CD4-positive, alpha-beta memory T cell (primary cell): ENCODE measurements at regions of chr21 and their contacts with region 1.

Region 1: DNA sequence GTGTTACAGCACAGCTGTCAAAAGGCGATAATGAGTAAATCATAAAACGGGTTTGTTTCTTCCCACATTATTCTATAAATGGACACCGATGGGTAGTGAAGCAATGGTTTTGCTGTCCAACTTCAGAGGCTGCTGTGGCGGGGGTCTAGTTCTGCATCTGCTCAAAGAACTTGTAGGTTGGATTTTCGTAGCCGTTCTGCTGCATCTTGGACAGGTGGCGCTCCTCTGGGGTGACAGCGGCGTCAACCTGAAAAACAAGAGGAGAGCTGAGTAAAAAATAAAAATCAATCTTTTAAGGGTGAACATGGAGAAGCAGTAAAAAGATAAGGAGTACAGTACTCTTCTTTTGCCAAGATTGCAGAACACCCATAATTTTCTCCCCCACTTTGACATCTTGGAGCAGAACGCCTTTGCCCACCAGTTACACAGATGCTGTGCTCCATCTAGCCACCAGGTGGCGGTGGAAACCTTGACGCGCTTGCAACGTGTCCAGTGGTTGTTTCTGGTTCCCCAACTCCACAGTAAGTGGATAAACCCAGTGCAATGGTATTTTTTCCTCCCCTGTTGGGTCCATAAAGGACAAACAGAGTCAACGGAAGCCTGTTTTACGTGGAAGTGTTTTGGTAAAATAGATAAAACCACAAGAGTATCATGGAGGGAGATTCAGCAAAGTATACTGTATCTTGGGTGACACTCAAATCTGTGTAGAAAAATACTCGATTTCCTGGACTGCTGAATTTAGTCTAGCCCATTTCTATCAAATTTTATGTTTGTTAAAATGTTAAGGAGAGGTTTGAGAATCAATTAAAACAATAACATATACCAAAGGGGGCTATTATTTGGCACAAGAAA is 147.0 kb downstream of the GABPA start:
- DNase-seq: peak; percentile 42 to 56 (median 48)
- H3K4me3 ChIP-seq: no peak overlapping the region
- H3K4me3 Mint-ChIP-seq: no peak overlapping the region
- H3K27ac ChIP-seq: no peak overlapping the region
- H3K27ac Mint-ChIP-seq: no peak overlapping the region
- H3K4me1 ChIP-seq: no peaks in the 10 kb centered on the region
- H3K4me1 Mint-ChIP-seq: no peaks in the 10 kb centered on the region
- H3K27me3 ChIP-seq: no peaks in the 10 kb centered on the region
- H3K27me3 Mint-ChIP-seq: no peaks in the 10 kb centered on the region

Region 2: GRCh38 chr21:25734904-25735645 is 146.7 kb before region 1 on chr21 and contains the starts of genes ATP5PF and GABPA:
- CTCF ChIA-PET with region 1: no interaction called
- POLR2A ChIA-PET with region 1: no interaction called
- intact Hi-C with region 1: no loop called
- DNase-seq: peak; percentile 96 to 98 (median 98)
- H3K4me3 ChIP-seq: peak within 1 kb of the TSS; percentile 77 to 93
- H3K4me3 Mint-ChIP-seq: peak within 1 kb of the TSS; percentile 99 to 100 (median 100)
- H3K27ac ChIP-seq: peak within 1 kb of the TSS; percentile 91
- H3K27ac Mint-ChIP-seq: peak within 1 kb of the TSS; percentile 99 to 100 (median 100)
- H3K4me1 ChIP-seq: peaks cover 52% of the 10 kb centered on the region
- H3K4me1 Mint-ChIP-seq: peaks cover 38 to 71% (median 53%) of the 10 kb centered on the region in 4 donors
- H3K27me3 ChIP-seq: no peaks in the 10 kb centered on the region
- H3K27me3 Mint-ChIP-seq: peaks cover 3 to 4% of the 10 kb centered on the region in 2 donors
- total RNA-seq, gene ATP5PF: 56.6 to 64.1 TPM
- total RNA-seq, gene GABPA: 28.4 to 29.4 TPM

Region 3: GRCh38 chr21:25772686-25773085 is 109.1 kb before region 1 on chr21:
- CTCF ChIA-PET with region 1: no interaction called
- POLR2A ChIA-PET with region 1: no interaction called
- intact Hi-C with region 1: no loop called
- DNase-seq: no peak
- H3K4me3 ChIP-seq: no peak overlapping the region
- H3K4me3 Mint-ChIP-seq: no peak overlapping the region
- H3K27ac ChIP-seq: no peak overlapping the region
- H3K27ac Mint-ChIP-seq: no peak overlapping the region
- H3K4me1 ChIP-seq: no peaks in the 10 kb centered on the region
- H3K4me1 Mint-ChIP-seq: no peaks in the 10 kb centered on the region
- H3K27me3 ChIP-seq: no peaks in the 10 kb centered on the region
- H3K27me3 Mint-ChIP-seq: no peaks in the 10 kb centered on the region

Region 4: GRCh38 chr21:26041431-26042180 is 159.9 kb after region 1 on chr21:
- CTCF ChIA-PET with region 1: no interaction called
- POLR2A ChIA-PET with region 1: no interaction called
- intact Hi-C with region 1: no loop called
- DNase-seq: no peak
- H3K4me3 ChIP-seq: no peak overlapping the region
- H3K4me3 Mint-ChIP-seq: no peak overlapping the region
- H3K27ac ChIP-seq: no peak overlapping the region
- H3K27ac Mint-ChIP-seq: no peak overlapping the region
- H3K4me1 ChIP-seq: no peaks in the 10 kb centered on the region
- H3K4me1 Mint-ChIP-seq: peaks cover 0 to 4% (median 3%) of the 10 kb centered on the region in 4 donors
- H3K27me3 ChIP-seq: no peaks in the 10 kb centered on the region
- H3K27me3 Mint-ChIP-seq: no peaks in the 10 kb centered on the region

Region 5: GRCh38 chr21:26717146-26717739 is 835.5 kb after region 1 on chr21:
- CTCF ChIA-PET with region 1: interaction called, 9 read pairs
- POLR2A ChIA-PET with region 1: no interaction called
- intact Hi-C with region 1: loop called (anchors 1 kb)
- DNase-seq: peak in 2 of 5 donors; percentile 17 to 18
- H3K4me3 ChIP-seq: no peak overlapping the region
- H3K4me3 Mint-ChIP-seq: no peak overlapping the region
- H3K27ac ChIP-seq: no peak overlapping the region
- H3K27ac Mint-ChIP-seq: no peak overlapping the region
- H3K4me1 ChIP-seq: no peaks in the 10 kb centered on the region
- H3K4me1 Mint-ChIP-seq: peaks cover 0 to 4% (median under 1%) of the 10 kb centered on the region in 4 donors
- H3K27me3 ChIP-seq: no peaks in the 10 kb centered on the region
- H3K27me3 Mint-ChIP-seq: no peaks in the 10 kb centered on the region